Heart left ventricle (tissue), 16 donors: ENCODE measurements at regions of chr5 and their contacts with region 1.

Region 1: DNA sequence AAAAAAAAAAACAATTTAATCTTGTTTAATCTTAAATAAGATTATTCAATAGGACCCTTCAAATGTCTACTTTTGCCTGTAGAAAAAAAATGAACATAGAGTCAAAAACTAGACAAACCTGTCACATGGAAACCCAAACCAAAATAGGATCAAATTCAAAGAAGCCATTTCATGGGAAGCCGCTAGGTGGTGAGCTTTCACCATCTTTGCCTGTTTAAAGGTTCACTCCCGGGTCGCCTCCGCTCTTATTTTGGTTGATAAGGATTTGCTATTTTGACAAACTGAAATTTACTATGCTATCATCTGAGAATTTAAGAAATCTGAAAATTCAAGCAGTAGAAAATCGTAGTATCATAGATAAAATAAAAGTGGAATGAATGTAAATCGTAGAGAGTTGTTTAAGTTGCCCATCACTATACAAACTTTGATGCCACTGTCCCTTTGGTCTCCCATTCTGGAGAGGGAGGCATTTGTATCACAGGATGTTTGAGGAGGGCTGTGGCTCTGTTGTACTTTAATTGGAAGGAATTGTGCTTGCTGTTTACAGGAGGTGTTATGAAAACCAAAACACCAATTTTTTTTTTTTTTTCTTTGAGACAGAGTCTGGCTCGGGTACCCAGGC is 43.5 kb upstream of the DNAH5 start:
- DNase-seq: peak in 2 of 5 donors; percentile 24 to 44
- ATAC-seq: peak in 3 of 4 donors; percentile 54 to 80 (median 67)
- H3K4me3 ChIP-seq: no peak overlapping the region
- H3K27ac ChIP-seq: no peak overlapping the region
- H3K4me1 ChIP-seq: peaks cover 0 to 6% (median 0%) of the 10 kb centered on the region in 12 donors
- H3K27me3 ChIP-seq: peaks cover 0 to 7% (median 0%) of the 10 kb centered on the region in 9 donors
- CTCF ChIP-seq: peak; percentile 62 to 93 (median 86)
- POLR2A ChIP-seq: no peak

Region 2: GRCh38 chr5:13859285-13860065 is 128.5 kb before region 1 on chr5:
- intact Hi-C with region 1: no loop called
- DNase-seq: no peak
- ATAC-seq: no peak
- H3K4me3 ChIP-seq: no peak overlapping the region
- H3K27ac ChIP-seq: no peak overlapping the region
- H3K4me1 ChIP-seq: no peaks in the 10 kb centered on the region
- H3K27me3 ChIP-seq: no peaks in the 10 kb centered on the region
- CTCF ChIP-seq: no peak
- POLR2A ChIP-seq: no peak

Region 3: GRCh38 chr5:14357851-14358250 is 369.9 kb after region 1 on chr5:
- intact Hi-C with region 1: loop called in 7 of 10 experiments (anchors 5 to 10 kb)
- DNase-seq: no peak
- ATAC-seq: peak in 3 of 4 donors; percentile 8 to 32 (median 30)
- H3K4me3 ChIP-seq: peak overlapping the region in 1 of 12 donors; percentile 1
- H3K27ac ChIP-seq: peak overlapping the region in 1 of 12 donors; percentile 24
- H3K4me1 ChIP-seq: peaks cover 0 to 46% (median 20%) of the 10 kb centered on the region in 12 donors
- H3K27me3 ChIP-seq: no peaks in the 10 kb centered on the region
- CTCF ChIP-seq: no peak
- POLR2A ChIP-seq: no peak

Region 4: DNA sequence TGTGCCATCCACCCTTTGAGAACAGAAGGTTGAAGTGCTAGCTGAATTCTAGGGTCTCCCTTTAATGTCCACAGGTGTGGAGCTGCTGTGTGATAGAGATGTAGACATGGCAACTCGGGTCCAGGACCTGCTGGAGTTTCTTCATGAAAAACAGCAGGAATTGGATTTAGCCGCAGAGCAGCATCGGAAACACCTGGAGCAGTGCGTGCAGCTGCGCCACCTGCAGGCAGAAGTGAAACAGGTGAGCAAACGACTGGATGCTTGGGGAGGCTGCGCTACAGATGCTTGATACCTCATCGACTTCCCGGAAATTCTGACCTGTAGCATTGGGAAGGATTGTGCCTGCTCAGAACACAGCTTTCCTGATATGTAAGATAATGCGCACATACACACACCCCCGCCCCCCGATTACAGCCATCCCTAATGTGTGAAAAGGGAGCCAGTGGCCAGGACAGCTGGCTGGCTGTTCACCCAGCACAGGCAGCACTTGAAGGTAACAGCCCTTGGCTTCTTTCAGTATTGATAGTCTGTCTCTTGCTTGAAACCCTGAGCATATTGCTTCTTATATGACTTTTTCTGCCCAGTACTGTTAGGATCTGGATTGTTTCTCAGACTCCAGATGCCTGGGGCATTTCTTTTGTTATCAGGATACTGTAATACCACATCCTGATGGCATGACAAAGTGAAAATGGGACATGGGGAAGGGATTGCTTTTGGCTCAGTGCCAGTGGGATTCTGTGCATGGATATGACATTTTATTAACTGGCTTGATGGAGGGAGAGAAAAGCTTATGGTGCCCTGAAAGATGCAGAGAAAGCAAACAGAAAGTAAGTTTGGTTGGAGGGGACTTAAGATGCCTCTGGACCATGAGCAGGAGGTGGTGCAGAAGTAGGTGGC is 376.9 kb after region 1 on chr5:
- intact Hi-C with region 1: loop called in 6 of 10 experiments (anchors 2 to 10 kb)
- DNase-seq: no peak
- ATAC-seq: peak in 2 of 4 donors; percentile 6 to 18
- H3K4me3 ChIP-seq: no peak overlapping the region
- H3K27ac ChIP-seq: no peak overlapping the region
- H3K4me1 ChIP-seq: peaks cover 0 to 13% (median 2%) of the 10 kb centered on the region in 12 donors
- H3K27me3 ChIP-seq: no peaks in the 10 kb centered on the region
- CTCF ChIP-seq: peak in 11 of 12 donors; percentile 12 to 60 (median 36)
- POLR2A ChIP-seq: no peak